Colonic mucosa (tissue), 4 donors: ENCODE measurements at regions of chr3 and their contacts with region 1.

Region 1: GRCh38 chr3:141011232-141011996 is 39.7 kb upstream of the SPSB4 start:
- DNase-seq: peak; percentile 67
- H3K4me3 ChIP-seq: no peak overlapping the region
- H3K27ac ChIP-seq: no peak overlapping the region
- H3K4me1 ChIP-seq: no peaks in the 10 kb centered on the region
- H3K27me3 ChIP-seq: no peaks in the 10 kb centered on the region
- CTCF ChIP-seq: peak; percentile 64

Region 2: GRCh38 chr3:140809316-140809715 is 202.1 kb before region 1 on chr3:
- intact Hi-C with region 1: no loop called
- DNase-seq: no peak
- H3K4me3 ChIP-seq: no peak overlapping the region
- H3K27ac ChIP-seq: no peak overlapping the region
- H3K4me1 ChIP-seq: no peaks in the 10 kb centered on the region
- H3K27me3 ChIP-seq: no peaks in the 10 kb centered on the region
- CTCF ChIP-seq: no peak

Region 3: DNA sequence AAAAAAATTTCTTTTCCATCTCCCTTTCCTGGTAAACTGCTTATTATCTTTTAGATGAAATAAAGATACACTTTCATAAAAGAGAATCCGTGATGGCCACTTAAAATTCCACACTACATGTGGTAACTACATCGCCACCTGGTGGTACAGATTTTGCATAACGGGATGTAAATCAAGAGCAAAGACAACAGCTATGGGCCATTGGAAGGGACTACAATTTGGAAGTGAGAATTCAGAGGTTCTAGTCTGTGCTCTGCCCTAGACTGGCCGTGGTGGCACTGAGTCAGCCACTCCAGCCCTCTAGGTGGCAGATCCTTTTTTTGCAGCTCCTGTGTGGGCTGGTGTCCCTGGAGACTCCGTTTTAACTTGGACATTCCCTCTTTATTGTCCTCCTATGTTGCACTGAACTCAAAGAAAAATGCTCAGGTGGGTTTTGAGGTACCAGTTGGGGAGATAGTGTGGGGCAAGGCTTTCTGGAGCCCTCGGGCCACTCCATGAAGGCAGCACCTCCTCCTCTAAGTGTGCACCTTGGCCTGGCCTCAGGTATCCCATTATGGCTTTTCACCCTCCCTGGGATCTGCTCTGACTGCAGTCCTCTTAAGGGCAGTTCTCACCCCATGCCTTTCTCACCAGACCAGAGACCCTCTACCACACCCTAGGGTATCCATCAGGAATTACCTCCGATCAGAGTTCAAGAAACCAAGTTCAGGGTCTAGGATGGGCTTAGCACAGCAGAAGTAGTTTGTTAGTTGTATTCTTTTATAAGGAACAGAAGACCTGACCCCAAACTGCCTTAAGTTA is 94.6 kb after region 1 on chr3:
- intact Hi-C with region 1: loop called (anchors 5 kb)
- DNase-seq: peak; percentile 75
- H3K4me3 ChIP-seq: no peak overlapping the region
- H3K27ac ChIP-seq: no peak overlapping the region
- H3K4me1 ChIP-seq: no peaks in the 10 kb centered on the region
- H3K27me3 ChIP-seq: no peaks in the 10 kb centered on the region
- CTCF ChIP-seq: peak; percentile 51

Region 4: GRCh38 chr3:141192345-141192744 is 180.9 kb after region 1 on chr3:
- intact Hi-C with region 1: loop called (anchors 5 kb)
- DNase-seq: peak; percentile 100
- H3K4me3 ChIP-seq: no peak overlapping the region
- H3K27ac ChIP-seq: no peak overlapping the region
- H3K4me1 ChIP-seq: no peaks in the 10 kb centered on the region
- H3K27me3 ChIP-seq: no peaks in the 10 kb centered on the region
- CTCF ChIP-seq: peak; percentile 89